Dendritic cell treated with granulocyte-macrophage colony-stimulating factor and Interleukin-4, amounts not matched to agents 40 ng/mL and 50 ng/mL, for 4 days (primary cell): ENCODE measurements at regions of chr12 and their contacts with region 1.

Region 1: DNA sequence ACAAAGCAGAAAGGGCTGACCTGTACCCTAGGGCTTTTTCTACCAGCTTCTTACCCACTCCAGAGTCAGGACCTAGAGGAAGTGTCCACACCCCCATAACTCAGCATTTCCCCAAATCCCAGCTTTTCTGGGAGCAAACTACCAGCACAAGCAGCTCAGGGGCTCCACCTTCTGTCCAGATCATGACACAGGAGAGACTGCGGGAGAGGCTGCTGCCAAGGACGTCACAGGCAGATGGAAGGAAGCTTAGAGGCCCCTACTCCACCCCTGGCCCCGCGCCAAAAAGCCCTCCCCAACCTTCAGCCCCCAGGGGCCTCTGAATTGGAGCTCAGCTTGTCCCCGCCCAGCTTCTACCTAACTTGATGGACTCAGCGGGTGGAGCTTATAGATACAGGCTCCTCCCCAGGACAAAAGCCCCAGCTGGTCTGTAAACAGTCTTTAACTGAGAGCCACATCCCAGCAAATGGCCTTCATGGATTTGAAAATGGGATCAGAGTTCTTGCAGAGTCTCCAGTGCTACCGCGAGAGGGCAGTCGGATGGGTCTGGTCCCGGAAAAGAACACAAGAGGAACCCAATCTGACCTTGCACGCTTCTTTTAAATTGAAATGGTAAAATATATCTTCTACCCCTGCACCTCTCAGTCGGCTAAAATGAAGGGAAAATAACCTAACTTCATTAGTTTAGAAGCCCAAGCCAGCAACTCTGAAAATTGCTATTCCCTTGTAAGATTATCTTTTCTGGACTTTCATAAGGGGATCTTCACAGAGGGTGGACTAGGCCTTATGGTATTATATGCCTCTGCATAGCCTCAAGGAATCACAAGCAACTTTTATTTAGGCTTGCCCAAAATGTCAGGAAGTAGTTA is 6.8 kb upstream of the BAZ2A start:
- H3K4me3 Mint-ChIP-seq: peak overlapping the region; percentile 97
- H3K27ac Mint-ChIP-seq: peak overlapping the region; percentile 90
- H3K4me1 Mint-ChIP-seq: peaks cover 71% of the 10 kb centered on the region
- H3K27me3 Mint-ChIP-seq: no peaks in the 10 kb centered on the region

Region 2: DNA sequence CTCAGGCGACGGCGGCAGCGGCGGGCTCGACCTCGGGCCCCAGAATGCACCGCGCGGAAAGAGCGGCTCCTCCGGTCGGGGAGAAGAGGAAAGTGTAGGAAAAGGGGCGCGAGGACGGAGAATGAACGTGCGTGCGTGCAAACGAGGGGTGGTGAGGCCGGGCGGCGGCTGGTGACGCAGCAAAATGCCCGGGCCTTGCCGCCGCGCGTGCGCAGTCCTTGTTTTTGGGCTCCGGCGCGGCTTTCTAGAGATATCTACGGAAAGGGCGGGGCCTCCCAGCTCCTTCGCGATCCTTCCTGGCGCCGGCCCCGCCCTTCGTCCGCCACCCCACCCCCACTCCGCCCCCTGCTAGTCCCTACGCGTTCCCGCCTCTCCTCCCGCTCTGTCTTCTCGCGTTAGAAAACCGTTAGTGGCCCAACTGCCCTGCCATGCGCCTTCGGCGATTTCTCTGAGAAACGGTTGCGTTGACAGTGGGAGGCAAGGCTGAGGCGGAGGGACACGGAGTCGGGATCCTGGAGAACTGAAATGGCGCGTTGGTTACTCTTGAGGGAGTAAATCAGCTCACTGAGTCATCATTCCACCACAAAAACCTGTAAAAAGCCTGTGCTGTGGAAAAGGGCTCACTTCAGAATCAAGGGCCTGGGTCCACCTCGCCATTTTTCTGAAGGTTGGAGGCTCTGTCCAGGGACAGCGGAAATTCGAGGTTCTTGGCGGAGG is 51.4 kb after region 1 on chr12 and contains the start of gene PTGES3:
- intact Hi-C with region 1: loop called (anchors 5 kb)
- H3K4me3 Mint-ChIP-seq: peak within 1 kb of the TSS; percentile 99
- H3K27ac Mint-ChIP-seq: peak within 1 kb of the TSS; percentile 99
- H3K4me1 Mint-ChIP-seq: peaks cover 24% of the 10 kb centered on the region
- H3K27me3 Mint-ChIP-seq: no peaks in the 10 kb centered on the region

Region 3: DNA sequence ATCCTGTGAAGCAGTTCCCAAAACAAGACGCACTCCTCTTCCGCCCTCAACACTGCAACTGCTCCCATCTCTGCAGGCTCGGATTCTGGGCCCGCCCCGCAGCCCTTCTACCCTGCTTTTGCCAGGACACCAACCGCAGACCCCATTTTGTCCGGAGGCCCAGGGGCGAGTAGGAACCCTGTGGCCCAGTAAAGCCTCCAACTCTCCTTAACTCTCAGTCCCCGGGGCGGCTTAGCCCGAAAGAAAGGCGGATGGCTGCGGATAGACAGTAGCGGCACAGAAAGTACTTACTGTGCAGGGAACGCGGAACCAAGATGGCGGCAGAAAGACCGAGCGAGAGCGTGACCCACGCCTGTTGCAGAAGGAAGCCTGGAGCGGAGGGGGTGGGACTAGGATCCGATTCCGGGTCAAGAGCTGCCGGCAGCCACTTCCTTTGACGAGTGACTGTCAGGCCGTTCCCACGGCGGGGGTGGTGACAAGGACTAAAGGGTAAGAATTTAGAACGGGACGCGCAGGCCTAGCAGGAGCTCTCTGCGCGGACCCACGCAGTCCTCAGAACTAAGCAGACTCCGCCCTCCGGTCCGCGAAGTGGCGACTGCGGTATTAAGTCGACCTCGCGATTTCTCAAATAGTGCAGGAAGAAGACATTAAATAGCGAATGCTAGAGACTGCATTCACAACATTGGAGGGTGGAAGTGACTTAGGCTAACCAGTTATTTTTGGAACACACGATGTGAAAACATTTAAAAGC is 88.2 kb after region 1 on chr12 and contains the start of gene NACA:
- intact Hi-C with region 1: loop called (anchors 5 kb)
- H3K4me3 Mint-ChIP-seq: peak within 1 kb of the TSS; percentile 97
- H3K27ac Mint-ChIP-seq: peak within 1 kb of the TSS; percentile 99
- H3K4me1 Mint-ChIP-seq: peaks cover 48% of the 10 kb centered on the region
- H3K27me3 Mint-ChIP-seq: no peaks in the 10 kb centered on the region

Region 4: GRCh38 chr12:57088459-57089248 is 451.7 kb after region 1 on chr12 and contains the start of gene NAB2:
- intact Hi-C with region 1: loop called (anchors 10 kb)
- H3K4me3 Mint-ChIP-seq: peak within 1 kb of the TSS; percentile 98
- H3K27ac Mint-ChIP-seq: peak within 1 kb of the TSS; percentile 99
- H3K4me1 Mint-ChIP-seq: peaks cover 72% of the 10 kb centered on the region
- H3K27me3 Mint-ChIP-seq: no peaks in the 10 kb centered on the region